WTC11 (cell line): ENCODE measurements at regions of chr16 and their contacts with region 1.

Region 1: GRCh38 chr16:78353610-78354275 is 254.3 kb downstream of the WWOX start:
- DNase-seq: no peak
- ATAC-seq: no peak
- H3K4me3 Mint-ChIP-seq: no peak overlapping the region
- H3K27ac Mint-ChIP-seq: no peak overlapping the region
- H3K4me1 Mint-ChIP-seq: no peaks in the 10 kb centered on the region
- H3K27me3 Mint-ChIP-seq: no peaks in the 10 kb centered on the region
- CTCF ChIP-seq: no peak

Region 2: GRCh38 chr16:78137179-78137578 is 216.6 kb before region 1 on chr16:
- CTCF ChIA-PET with region 1: no interaction called
- POLR2A ChIA-PET with region 1: interaction called, 11 read pairs
- DNase-seq: no peak
- ATAC-seq: no peak
- H3K4me3 Mint-ChIP-seq: no peak overlapping the region
- H3K27ac Mint-ChIP-seq: no peak overlapping the region
- H3K4me1 Mint-ChIP-seq: no peaks in the 10 kb centered on the region
- H3K27me3 Mint-ChIP-seq: no peaks in the 10 kb centered on the region
- CTCF ChIP-seq: no peak